Naive thymus-derived CD4-positive, alpha-beta T cell (primary cell): ENCODE measurements at regions of chr14 and their contacts with region 1.

Region 1: DNA sequence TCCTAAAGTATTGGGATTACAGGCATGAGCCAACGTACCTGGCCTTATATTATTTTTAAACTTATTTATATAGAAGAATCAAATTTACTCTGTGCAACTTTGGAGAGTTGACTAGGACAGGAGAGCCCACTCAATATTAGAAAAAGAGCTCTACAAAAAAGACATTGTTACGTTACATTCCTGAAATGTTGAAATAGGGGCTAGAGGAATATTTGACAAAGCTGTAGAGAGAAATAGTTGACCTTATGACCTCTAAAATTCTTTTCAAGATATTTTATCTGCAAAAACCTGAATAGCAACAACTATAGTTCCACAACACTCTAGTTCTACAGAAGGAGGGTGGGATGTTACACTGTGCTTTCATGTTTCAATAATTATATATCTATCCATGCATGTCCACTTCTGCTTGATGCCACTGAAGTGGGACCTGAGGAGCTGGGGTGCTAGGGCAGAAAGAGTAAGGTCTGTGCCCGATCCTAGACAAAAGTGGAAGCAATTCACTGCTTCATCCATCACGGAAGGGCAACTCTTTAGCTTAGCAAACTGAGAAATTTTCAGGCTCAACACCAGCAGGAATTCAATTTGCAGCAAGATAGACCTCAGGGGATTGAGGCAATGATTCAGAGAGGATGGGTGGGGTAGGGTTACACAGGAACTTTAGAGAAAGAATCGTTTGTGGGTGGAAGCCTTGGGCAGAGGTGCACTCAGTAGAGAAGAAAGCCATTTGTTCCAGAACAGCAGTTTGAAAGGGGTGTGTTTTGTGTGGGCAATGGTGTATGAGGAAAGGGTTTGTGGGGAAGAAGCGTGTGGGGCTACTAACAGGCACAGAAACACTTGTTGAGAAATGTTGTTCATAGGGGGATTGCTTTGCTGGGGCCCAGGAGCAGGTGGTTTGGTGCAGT is 16.0 kb upstream of the RNASE10 start:
- DNase-seq: peak in 5 of 9 donors; percentile 14 to 40 (median 35)
- ATAC-seq: peak; percentile 70
- H3K4me3 ChIP-seq: peak overlapping the region; percentile 35
- H3K4me3 Mint-ChIP-seq: peak overlapping the region; percentile 67 to 93 (median 76)
- H3K27ac ChIP-seq: peak overlapping the region; percentile 46
- H3K27ac Mint-ChIP-seq: peak overlapping the region; percentile 65 to 95 (median 86)
- H3K4me1 ChIP-seq: peaks cover 37 to 51% of the 10 kb centered on the region in 2 donors
- H3K4me1 Mint-ChIP-seq: peaks cover 47 to 89% (median 79%) of the 10 kb centered on the region in 7 donors
- H3K27me3 ChIP-seq: no peaks in the 10 kb centered on the region
- H3K27me3 Mint-ChIP-seq: no peaks in the 10 kb centered on the region

Region 2: GRCh38 chr14:19800282-19801117 is 688.8 kb before region 1 on chr14:
- CTCF ChIA-PET with region 1: no interaction called
- POLR2A ChIA-PET with region 1: no interaction called
- intact Hi-C with region 1: no loop called
- DNase-seq: no peak
- ATAC-seq: no peak
- H3K4me3 ChIP-seq: no peak overlapping the region
- H3K4me3 Mint-ChIP-seq: no peak overlapping the region
- H3K27ac ChIP-seq: no peak overlapping the region
- H3K27ac Mint-ChIP-seq: no peak overlapping the region
- H3K4me1 ChIP-seq: no peaks in the 10 kb centered on the region
- H3K4me1 Mint-ChIP-seq: no peaks in the 10 kb centered on the region
- H3K27me3 ChIP-seq: no peaks in the 10 kb centered on the region
- H3K27me3 Mint-ChIP-seq: peaks cover 0 to 9% (median 0%) of the 10 kb centered on the region in 5 donors

Region 3: DNA sequence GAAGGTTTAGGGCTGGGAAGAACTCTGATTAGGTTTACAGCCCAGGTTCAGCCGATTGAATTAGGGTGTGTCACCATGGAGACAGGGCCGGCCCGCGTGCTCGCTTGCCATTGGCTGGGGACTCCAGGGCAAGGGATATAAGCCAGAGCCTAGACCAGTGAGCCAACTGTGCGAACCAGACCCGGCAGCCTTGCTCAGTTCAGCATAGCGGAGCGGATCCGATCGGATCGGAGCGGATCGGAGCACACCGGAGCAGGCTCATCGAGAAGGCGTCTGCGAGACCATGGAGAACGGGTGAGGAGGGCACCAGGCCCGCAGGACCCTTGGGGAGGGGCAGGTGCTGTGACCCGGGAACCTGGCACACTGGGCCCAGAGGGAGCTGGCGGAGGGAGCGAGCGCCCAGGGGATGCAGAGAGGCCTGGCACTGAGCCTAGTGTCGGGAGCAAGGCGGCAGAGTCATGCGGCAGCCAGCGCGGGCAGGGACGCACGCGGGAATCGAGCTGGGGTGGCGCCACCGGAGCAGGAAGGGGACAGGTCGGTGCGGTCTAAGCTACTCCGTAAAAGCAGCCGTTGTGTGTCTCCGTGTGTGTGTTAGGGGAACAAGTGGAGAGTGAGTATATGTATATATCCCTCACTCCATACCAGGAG is 20.0 kb before region 1 on chr14 and contains the start of gene PNP:
- CTCF ChIA-PET with region 1: interaction called, 3 read pairs
- POLR2A ChIA-PET with region 1: interaction called, 32 read pairs
- intact Hi-C with region 1: loop called (anchors 1 to 2 kb)
- DNase-seq: peak; percentile 74 to 88 (median 84)
- ATAC-seq: peak; percentile 94
- H3K4me3 ChIP-seq: peak within 1 kb of the TSS; percentile 87
- H3K4me3 Mint-ChIP-seq: peak within 1 kb of the TSS; percentile 95 to 100 (median 99)
- H3K27ac ChIP-seq: peak within 1 kb of the TSS; percentile 87
- H3K27ac Mint-ChIP-seq: peak within 1 kb of the TSS; percentile 89 to 98 (median 97)
- H3K4me1 ChIP-seq: peaks cover 13 to 32% of the 10 kb centered on the region in 2 donors
- H3K4me1 Mint-ChIP-seq: peaks cover 40 to 49% (median 43%) of the 10 kb centered on the region in 7 donors
- H3K27me3 ChIP-seq: no peaks in the 10 kb centered on the region
- H3K27me3 Mint-ChIP-seq: peaks cover 0 to 6% (median 0%) of the 10 kb centered on the region in 5 donors
- total RNA-seq, gene PNP: 58.9 to 179 (median 83.0) TPM

Region 4: DNA sequence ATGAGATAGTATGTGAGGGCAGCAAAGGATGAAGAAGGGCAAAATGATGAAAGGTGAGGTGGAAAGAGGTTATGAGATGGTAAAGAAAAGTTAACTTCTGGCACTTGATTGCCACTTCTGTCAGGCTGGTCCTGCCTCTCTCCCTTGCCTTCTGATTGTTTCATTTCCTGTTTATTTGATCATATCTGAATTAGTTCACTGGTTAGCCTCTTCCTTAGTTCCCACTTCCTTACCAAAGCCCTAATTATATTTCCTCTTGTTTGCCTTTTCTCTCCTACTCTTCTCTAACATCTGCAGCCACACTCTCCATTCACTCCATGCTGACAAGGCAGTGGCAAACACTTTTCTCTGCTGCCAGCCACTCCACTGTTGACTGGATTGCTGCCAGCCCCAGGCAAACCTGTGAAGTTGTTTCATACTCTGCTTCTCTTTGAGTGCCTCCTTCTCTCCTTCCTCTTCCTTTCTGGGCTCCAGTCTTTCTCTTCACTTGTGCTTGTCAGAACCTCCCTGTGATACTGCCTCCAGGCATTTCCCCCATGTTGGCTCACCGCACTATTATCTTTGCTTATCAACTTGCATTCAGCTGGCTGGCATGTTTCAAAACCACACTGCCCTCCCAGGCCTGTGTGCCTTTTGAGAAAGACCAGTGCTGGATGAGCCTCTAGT is 12.0 kb before region 1 on chr14:
- CTCF ChIA-PET with region 1: interaction called, 3 read pairs
- POLR2A ChIA-PET with region 1: interaction called, 36 read pairs
- intact Hi-C with region 1: loop called in 1 of 2 experiments (anchors 1 kb)
- DNase-seq: peak in 7 of 9 donors; percentile 30 to 68 (median 56)
- ATAC-seq: peak; percentile 69
- H3K4me3 ChIP-seq: peak overlapping the region; percentile 22
- H3K4me3 Mint-ChIP-seq: peak overlapping the region; percentile 68 to 86 (median 77)
- H3K27ac ChIP-seq: peak overlapping the region; percentile 68
- H3K27ac Mint-ChIP-seq: peak overlapping the region; percentile 83 to 96 (median 89)
- H3K4me1 ChIP-seq: peaks cover 46 to 57% of the 10 kb centered on the region in 2 donors
- H3K4me1 Mint-ChIP-seq: peaks cover 51 to 98% (median 85%) of the 10 kb centered on the region in 7 donors
- H3K27me3 ChIP-seq: no peaks in the 10 kb centered on the region
- H3K27me3 Mint-ChIP-seq: no peaks in the 10 kb centered on the region

Region 5: DNA sequence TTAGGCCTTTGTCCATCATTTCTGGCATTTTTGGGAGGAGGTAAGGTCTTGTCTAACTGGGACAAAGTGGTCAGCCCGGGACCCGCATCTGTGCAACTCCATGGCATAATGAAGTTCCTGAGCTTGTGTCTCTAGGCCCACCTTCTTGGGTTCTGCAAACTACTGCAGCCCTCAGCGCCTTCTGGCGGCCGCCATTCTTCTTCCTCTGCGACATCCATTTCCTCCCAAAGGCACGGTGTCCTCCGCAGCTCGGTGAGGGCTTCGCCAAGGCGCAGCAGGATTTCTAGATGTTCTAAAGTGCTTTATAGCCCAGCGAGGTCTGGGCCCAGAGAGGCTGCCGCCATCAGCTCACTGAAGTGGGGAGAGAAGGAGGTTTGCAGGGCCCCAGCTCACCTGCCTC is 1318.6 kb after region 1 on chr14:
- CTCF ChIA-PET with region 1: no interaction called
- POLR2A ChIA-PET with region 1: no interaction called
- intact Hi-C with region 1: no loop called
- DNase-seq: no peak
- ATAC-seq: no peak
- H3K4me3 ChIP-seq: no peak overlapping the region
- H3K4me3 Mint-ChIP-seq: no peak overlapping the region
- H3K27ac ChIP-seq: no peak overlapping the region
- H3K27ac Mint-ChIP-seq: no peak overlapping the region
- H3K4me1 ChIP-seq: no peaks in the 10 kb centered on the region
- H3K4me1 Mint-ChIP-seq: no peaks in the 10 kb centered on the region
- H3K27me3 ChIP-seq: peaks cover 0 to 7% of the 10 kb centered on the region in 2 donors
- H3K27me3 Mint-ChIP-seq: peaks cover 22 to 27% (median 25%) of the 10 kb centered on the region in 5 donors